ENCODE measurements at regions of chr12 and their contacts with region 1.

Region 1: GRCh38 chr12:6567112-6567670 is 900 bp downstream of the NOP2 start:
- DNase-seq: no peak
- H3K4me3 ChIP-seq: peak overlapping the region; percentile 59 to 90 (median 72)
- H3K27ac ChIP-seq: peak overlapping the region in 3 of 4 donors; percentile 87 to 93 (median 92)
- H3K4me1 ChIP-seq: peaks cover 18 to 28% (median 20%) of the 10 kb centered on the region in 4 donors
- H3K27me3 ChIP-seq: no peaks in the 10 kb centered on the region
- CTCF ChIP-seq: no peak
- EP300 ChIP-seq: no peak
- POLR2A ChIP-seq: no peak

Region 2: DNA sequence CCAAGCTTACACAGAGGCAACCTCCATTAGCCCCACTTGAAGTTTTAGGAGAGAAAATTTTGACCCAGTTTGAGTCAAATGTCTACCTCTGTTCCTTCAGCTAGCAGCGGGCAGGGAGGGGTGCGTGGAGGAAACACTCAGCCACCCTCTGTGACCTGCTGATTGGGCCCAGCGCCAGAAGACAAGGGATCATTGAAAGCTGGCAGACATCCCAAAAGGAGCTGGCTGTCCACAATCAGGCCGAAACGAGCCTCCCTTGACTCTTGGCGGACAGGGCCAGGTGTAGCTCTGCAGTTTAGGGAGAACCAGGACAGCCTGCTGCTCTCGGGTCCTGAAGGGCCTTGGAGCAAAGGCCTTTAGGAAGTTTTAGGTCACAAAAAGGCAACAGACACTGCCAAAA is 325.7 kb before region 1 on chr12:
- intact Hi-C with region 1: no loop called
- DNase-seq: no peak
- H3K4me3 ChIP-seq: no peak overlapping the region
- H3K27ac ChIP-seq: peak overlapping the region; percentile 26 to 51 (median 39)
- H3K4me1 ChIP-seq: peaks cover 13 to 15% (median 14%) of the 10 kb centered on the region in 4 donors
- H3K27me3 ChIP-seq: no peaks in the 10 kb centered on the region
- CTCF ChIP-seq: no peak
- EP300 ChIP-seq: no peak
- POLR2A ChIP-seq: no peak

Region 3: DNA sequence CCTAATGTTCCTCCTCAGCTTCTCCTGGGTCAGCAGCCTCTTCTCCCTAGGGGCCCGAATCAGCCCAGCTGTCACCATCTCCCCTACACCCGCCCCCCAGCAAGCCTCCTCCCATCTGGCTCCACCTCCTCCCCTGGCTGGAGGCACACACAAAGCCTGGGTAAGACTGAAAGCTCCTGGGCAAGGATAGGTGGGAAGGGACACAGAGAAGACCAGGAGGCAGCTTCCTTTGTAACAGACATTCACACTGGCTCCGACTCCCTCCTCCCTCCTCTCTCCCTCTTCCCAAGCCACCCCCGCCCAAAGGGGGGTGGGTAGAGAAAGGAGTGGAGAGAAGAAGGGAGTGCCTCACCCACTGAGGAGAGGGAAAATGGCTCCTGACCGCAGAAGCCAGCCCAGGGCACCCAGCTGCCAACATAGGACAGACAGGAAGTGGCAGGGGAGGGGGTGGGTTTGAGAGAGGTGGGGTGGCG is 35.9 kb after region 1 on chr12:
- intact Hi-C with region 1: loop called (anchors 5 kb)
- DNase-seq: no peak
- H3K4me3 ChIP-seq: peak overlapping the region; percentile 21 to 98 (median 68)
- H3K27ac ChIP-seq: peak overlapping the region; percentile 95 to 99 (median 99)
- H3K4me1 ChIP-seq: peaks cover 41 to 63% (median 60%) of the 10 kb centered on the region in 4 donors
- H3K27me3 ChIP-seq: no peaks in the 10 kb centered on the region
- CTCF ChIP-seq: no peak
- EP300 ChIP-seq: no peak
- POLR2A ChIP-seq: no peak

Region 4: DNA sequence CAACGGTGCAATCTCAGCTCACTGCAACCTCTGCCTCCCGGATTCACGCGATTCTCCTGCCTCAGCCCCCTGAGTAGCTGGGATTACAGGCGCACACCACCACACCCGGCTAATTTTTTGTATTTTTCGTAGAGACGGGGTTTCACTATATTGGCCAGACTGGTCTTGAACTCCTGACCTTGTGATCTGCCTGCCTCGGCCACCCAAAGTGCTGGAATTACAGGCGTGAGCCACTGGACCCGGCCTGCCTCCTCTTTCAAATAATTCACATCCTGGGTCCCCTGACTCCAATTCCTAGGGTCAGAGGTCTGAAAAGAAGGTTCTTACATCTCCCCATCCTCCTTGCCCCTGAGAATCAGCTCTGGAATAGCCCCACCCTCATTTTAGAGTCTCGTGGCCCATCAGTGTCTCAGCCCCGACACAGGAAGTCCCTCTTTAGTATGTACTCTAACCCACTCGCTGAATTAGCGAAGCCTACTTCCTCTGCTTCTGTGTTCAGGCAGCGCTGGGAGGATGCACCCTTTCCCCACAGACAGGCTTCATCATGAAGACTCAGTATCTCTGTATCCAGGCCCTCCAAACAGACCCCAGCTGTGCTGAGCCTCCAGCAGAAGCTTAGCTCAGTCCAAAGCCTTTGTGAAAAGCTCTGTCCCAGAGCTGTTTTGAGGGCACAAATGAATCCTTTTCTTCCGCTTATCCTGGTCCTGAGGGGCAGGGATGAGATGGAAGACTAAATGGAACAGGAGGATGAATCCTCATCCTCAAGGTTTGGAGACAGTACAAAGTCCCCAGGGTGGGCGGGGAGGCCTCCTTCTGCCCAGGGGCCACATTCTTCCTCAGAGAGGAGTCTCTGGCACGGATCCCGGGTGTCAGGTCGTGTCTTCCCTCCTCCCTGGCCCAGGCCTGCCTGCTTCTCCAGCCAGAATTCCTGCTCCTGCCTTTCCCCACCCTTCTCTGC is 65.1 kb after region 1 on chr12:
- intact Hi-C with region 1: no loop called
- DNase-seq: no peak
- H3K4me3 ChIP-seq: no peak overlapping the region
- H3K27ac ChIP-seq: peak overlapping the region in 1 of 4 donors; percentile 42
- H3K4me1 ChIP-seq: peaks cover 0 to 14% (median 10%) of the 10 kb centered on the region in 4 donors
- H3K27me3 ChIP-seq: peaks cover 0 to 11% (median 0%) of the 10 kb centered on the region in 4 donors
- CTCF ChIP-seq: no peak
- EP300 ChIP-seq: no peak
- POLR2A ChIP-seq: no peak

Measured in esophagus muscularis mucosa (tissue), 4 donors.